SK-N-SH (cell line): ENCODE measurements at regions of chr2 and their contacts with region 1.

Region 1: DNA sequence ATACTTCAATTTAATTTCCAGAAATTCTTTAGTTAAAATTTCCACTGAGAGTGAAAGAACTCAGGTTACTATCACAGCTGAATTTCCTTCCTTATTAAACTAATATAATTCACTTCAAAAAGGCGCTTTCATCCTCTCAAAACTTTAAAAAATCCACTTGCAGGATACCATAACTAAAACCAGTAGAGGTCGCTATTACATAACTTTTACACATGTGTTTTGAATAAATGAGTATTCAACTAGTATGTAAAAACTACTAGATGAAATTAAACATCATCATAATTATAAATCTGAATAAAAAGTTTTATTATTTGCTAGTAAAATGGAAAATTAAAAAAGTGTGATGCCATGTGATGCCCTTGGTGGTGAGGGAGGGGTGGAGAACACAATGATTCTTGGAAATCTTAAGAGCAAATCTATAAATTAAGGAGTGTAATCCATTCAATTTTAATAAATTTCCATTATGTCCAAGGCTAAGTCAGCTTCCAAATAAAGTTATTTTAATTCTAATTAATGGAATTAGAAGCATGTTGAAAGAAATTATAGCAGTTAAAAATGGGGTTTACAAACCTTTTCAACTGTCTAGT is 61.4 kb downstream of the SOS1 start:
- DNase-seq: peak; percentile 48
- H3K4me3 ChIP-seq: no peak overlapping the region
- H3K27ac ChIP-seq: 0 out of 4 replicates have a peak overlapping the region, but pooled peaks of 1 of the 2 experiments have one; percentile 8
- H3K4me1 ChIP-seq: peaks cover 0 to 3% of the 10 kb centered on the region in 2 experiments; a peak in 2 of 4 replicates
- H3K27me3 ChIP-seq: no peaks in the 10 kb centered on the region
- CTCF ChIP-seq: peak; percentile 96
- EP300 ChIP-seq: no peak
- RAD21 ChIP-seq: peak; percentile 85

Region 2: DNA sequence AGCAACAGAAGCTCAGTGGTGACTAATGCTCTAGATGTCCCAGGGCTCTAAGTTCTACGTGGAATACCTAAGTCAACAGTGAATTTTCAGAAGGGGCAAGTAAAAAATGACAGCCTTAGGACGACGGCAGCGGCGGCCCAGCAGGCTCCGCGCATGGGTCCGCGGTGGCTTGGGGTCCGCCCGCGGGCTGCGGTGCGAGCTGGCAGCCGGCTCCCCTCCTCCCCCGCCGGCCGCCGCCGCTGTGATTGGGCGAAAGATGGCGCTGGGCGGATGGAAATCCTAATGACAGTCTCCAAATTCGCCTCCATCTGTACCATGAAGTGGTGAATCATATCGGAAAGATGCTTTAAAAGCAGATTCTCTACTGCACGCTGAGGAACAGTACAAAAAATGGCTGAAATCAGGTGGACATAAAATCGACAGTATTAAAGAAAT is 531.4 kb before region 1 on chr2:
- CTCF ChIA-PET with region 1: no interaction called
- POLR2A ChIA-PET with region 1: no interaction called
- DNase-seq: peak; percentile 96
- H3K4me3 ChIP-seq: peak overlapping the region; percentile 50 to 58
- H3K27ac ChIP-seq: peak overlapping the region; percentile 58 to 74
- H3K4me1 ChIP-seq: peaks cover 0 to 2% of the 10 kb centered on the region in 2 experiments; a peak in 2 of 4 replicates
- H3K27me3 ChIP-seq: no peaks in the 10 kb centered on the region
- CTCF ChIP-seq: no peak
- EP300 ChIP-seq: no peak; a peak in 1 of 4 replicates
- RAD21 ChIP-seq: peak; percentile 47

Region 3: DNA sequence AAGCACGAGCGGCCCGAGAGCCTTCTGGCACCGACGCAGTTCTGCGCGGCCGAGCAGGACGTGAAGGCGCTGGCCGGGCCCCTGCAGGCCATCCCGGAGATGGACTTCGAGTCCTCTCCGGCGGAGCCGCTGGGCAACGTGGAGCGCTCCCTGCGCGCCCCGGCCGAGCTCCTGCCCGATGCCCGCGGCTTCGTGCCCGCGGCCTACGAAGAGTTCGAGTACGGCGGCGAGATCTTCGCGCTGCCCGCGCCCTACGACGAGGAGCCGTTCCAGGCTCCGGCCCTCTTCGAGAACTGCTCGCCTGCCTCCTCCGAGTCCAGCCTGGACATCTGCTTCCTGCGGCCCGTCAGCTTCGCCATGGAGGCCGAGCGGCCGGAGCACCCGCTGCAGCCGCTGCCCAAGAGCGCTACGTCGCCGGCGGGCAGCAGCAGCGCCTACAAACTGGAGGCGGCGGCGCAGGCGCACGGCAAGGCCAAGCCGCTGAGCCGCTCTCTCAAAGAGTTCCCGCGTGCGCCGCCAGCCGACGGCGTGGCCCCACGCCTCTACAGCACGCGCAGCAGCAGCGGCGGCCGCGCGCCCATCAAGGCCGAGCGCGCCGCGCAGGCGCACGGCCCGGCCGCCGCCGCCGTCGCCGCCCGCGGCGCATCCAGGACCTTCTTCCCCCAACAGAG is 99.4 kb before region 1 on chr2:
- CTCF ChIA-PET with region 1: no interaction called
- POLR2A ChIA-PET with region 1: no interaction called
- DNase-seq: peak; percentile 91
- H3K4me3 ChIP-seq: peak overlapping the region in 1 of 2 experiments; percentile 27; a peak in 1 of 4 replicates
- H3K27ac ChIP-seq: no peak overlapping the region
- H3K4me1 ChIP-seq: peaks cover 0 to 3% of the 10 kb centered on the region in 2 experiments; a peak in 1 of 4 replicates
- H3K27me3 ChIP-seq: no peaks in the 10 kb centered on the region
- CTCF ChIP-seq: no peak
- EP300 ChIP-seq: no peak
- RAD21 ChIP-seq: no peak

Region 4: GRCh38 chr2:39094852-39095306 is 35.4 kb after region 1 on chr2:
- CTCF ChIA-PET with region 1: interaction called, 12 read pairs
- POLR2A ChIA-PET with region 1: no interaction called
- DNase-seq: no peak
- H3K4me3 ChIP-seq: no peak overlapping the region
- H3K27ac ChIP-seq: no peak overlapping the region
- H3K4me1 ChIP-seq: peaks cover 5 to 8% of the 10 kb centered on the region in 2 experiments
- H3K27me3 ChIP-seq: no peaks in the 10 kb centered on the region
- CTCF ChIP-seq: no peak
- EP300 ChIP-seq: no peak
- RAD21 ChIP-seq: no peak

Region 5: DNA sequence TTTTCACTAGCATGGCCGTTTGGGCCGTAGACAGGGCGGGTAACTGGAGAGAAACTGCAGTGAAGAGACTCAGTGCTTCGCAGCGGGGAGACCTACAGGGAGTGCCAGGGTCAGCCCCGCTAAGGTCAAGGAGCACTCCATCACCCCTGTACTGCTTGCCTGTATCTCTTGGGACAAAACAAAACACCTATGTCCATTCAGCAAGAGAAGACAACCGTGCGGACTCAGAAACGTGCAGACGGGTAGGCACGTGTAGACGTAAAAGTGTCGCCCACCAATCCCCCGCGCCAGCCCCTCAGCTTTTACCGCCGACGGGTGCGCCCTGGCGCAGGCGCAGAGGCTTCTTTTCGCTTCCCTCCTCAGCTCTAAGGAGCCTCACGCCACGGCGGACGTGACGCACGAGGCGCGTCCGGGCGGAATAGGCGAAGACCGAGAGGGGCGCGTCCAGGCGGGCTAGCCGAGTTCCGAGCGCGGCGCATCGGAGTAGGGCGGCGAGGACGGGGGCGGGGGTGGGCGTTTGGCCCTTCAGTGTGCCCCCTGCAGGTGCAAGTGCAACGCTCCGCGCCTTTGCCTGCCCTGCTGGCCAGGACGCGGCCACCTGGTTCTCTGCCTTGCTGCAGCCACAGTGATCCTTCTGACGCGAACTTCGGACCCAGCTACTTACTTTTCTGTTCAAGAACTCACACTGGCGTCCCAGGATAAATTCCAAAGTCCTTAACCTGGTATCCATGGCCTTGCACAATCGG is 64.7 kb after region 1 on chr2:
- CTCF ChIA-PET with region 1: interaction called, 89 read pairs
- POLR2A ChIA-PET with region 1: interaction called, 3 read pairs
- DNase-seq: peak; percentile 95
- H3K4me3 ChIP-seq: peak overlapping the region; percentile 87 to 89
- H3K27ac ChIP-seq: peak overlapping the region; percentile 70 to 97
- H3K4me1 ChIP-seq: peaks cover 6 to 34% of the 10 kb centered on the region in 2 experiments; a peak in 3 of 4 replicates
- H3K27me3 ChIP-seq: no peaks in the 10 kb centered on the region
- CTCF ChIP-seq: peak; percentile 68
- EP300 ChIP-seq: peak in 1 of 2 experiments; percentile 48; a peak in 1 of 4 replicates
- RAD21 ChIP-seq: peak; percentile 41; the same call in 1 of the 2 replicates

Region 6: GRCh38 chr2:39210846-39211245 is 151.4 kb after region 1 on chr2:
- CTCF ChIA-PET with region 1: interaction called, 11 read pairs
- POLR2A ChIA-PET with region 1: no interaction called
- DNase-seq: no peak
- H3K4me3 ChIP-seq: no peak overlapping the region
- H3K27ac ChIP-seq: no peak overlapping the region
- H3K4me1 ChIP-seq: no peaks in the 10 kb centered on the region
- H3K27me3 ChIP-seq: no peaks in the 10 kb centered on the region
- CTCF ChIP-seq: no peak
- EP300 ChIP-seq: no peak
- RAD21 ChIP-seq: no peak

Region 7: DNA sequence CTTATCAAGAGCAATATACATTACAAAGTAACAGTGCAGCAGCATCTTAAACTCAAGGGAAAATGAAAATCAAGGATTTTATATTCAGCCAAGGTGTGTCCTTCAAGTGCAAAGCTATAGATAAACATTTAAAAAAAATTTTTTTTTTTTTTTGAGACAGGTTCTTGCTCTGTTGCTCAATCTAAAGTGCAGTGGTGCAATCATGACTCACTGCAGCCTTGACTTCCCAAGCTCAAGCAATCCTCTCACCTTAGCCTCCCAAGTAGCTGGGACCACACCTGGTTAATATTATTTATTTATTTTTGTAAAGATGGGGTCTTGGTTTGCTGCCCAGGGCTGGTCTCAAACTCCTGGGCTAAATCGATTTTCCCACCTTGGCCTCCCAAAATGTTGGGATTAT is 175.3 kb after region 1 on chr2:
- CTCF ChIA-PET with region 1: interaction called, 300 read pairs
- POLR2A ChIA-PET with region 1: no interaction called
- DNase-seq: no peak
- H3K4me3 ChIP-seq: no peak overlapping the region
- H3K27ac ChIP-seq: no peak overlapping the region
- H3K4me1 ChIP-seq: no peaks in the 10 kb centered on the region; a peak in 1 of 4 replicates
- H3K27me3 ChIP-seq: no peaks in the 10 kb centered on the region
- CTCF ChIP-seq: no peak
- EP300 ChIP-seq: no peak
- RAD21 ChIP-seq: no peak